HEK293T (cell line): ENCODE measurements at regions of chr14 and their contacts with region 1.

Region 1: DNA sequence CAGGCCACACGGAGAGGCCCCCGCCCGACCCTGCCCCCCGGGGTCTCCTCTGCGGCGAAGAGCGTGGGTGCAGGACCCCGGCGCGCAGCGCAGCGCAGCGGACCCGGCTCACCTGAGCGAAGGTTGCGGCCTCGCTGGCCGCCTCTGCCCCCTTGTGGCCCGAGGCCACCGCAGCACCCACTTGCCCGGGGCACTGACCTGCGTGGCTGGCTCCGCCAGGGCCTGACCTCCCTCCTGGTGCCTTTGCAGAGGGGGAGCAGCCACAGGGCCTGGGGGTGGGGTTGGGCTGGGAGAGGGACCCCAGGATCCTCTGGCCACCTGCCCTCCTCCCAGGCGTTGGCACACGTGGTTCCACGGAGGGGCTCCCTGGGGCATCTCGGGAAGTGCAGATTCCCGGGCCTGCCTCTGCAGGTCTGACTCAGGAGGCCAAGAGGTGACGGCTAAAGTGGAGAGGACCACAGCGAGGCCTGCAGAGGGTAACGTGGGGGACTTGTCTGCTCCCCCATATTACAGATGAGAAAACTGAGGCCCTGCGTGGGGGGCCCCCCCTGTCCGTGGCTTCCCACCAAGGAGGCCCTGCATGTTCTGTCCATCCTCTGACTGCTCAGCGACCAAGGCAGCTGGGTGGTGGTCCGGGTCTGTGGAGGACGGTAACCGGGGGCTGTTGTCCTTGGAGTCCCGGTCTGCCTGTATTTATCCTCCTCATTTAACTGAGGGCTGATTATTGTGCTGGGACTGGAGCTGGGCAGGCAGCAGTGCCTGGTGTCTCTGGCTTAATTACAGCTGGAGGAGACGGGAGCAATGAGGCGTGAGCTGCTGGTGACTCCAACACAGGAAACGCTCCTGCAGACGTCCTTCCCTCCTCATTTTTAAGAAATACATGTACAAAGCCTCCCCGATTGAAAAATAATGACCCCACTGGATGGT is 67.9 kb upstream of the BEGAIN start:
- DNase-seq: peak; percentile 59

Region 2: GRCh38 chr14:100440187-100440631 is 214.9 kb before region 1 on chr14:
- CTCF ChIA-PET with region 1: interaction called, 15 read pairs
- POLR2A ChIA-PET with region 1: no interaction called
- DNase-seq: peak; percentile 68

Region 3: GRCh38 chr14:100621806-100622205 is 33.3 kb before region 1 on chr14:
- CTCF ChIA-PET with region 1: no interaction called
- POLR2A ChIA-PET with region 1: no interaction called
- DNase-seq: peak; percentile 31

Region 4: GRCh38 chr14:100803226-100803625 is 148.1 kb after region 1 on chr14:
- CTCF ChIA-PET with region 1: no interaction called
- POLR2A ChIA-PET with region 1: no interaction called
- DNase-seq: no peak